Naive thymus-derived CD4-positive, alpha-beta T cell (primary cell): ENCODE measurements at regions of chr20 and their contacts with region 1.

Region 1: DNA sequence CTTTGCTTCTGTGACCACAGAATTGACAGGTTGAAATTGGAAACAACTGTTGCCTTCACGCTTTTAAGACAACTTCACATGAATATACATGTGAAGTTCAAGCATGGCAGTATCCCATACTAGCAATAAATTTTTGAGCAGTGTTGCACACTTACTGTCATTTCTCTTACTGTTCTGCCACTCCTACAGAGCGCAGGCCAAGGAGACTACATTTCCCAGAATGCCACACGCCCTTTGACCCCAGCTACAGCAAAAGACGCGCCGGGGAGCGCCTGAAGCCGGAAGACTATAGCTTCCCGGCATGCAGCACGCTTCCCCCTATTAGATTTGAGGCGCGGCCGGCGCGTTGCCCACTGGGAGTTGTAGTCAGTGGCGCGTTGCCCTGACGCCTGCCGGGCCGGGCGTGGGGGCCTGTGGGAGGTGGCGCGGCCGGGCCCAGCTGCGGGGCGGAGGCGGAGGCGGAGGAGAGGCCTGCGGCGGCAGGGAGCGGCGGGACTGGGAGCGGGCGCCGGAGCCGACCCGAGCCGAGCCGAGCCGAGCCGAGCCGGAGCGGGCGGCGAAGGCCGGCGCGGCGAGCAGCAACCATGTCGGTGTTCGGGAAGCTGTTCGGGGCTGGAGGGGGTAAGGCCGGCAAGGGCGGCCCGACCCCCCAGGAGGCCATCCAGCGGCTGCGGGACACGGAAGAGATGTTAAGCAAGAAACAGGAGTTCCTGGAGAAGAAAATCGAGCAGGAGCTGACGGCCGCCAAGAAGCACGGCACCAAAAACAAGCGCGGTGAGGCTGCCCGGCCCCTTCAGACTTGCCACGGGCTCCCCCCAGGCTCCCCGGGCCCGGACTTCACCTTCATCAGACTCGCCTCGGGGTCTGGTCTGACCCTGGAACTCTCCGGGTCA is at the start of gene CHMP4B:
- DNase-seq: peak; percentile 94 to 99 (median 98)
- ATAC-seq: peak; percentile 98
- H3K4me3 ChIP-seq: peak within 1 kb of the TSS; percentile 74
- H3K4me3 Mint-ChIP-seq: peak within 1 kb of the TSS; percentile 89 to 100 (median 95)
- H3K27ac ChIP-seq: peak within 1 kb of the TSS; percentile 95
- H3K27ac Mint-ChIP-seq: peak within 1 kb of the TSS; percentile 84 to 96 (median 91)
- H3K4me1 ChIP-seq: peaks cover 22 to 23% of the 10 kb centered on the region in 2 donors
- H3K4me1 Mint-ChIP-seq: peaks cover 36 to 47% (median 42%) of the 10 kb centered on the region in 7 donors
- H3K27me3 ChIP-seq: no peaks in the 10 kb centered on the region
- H3K27me3 Mint-ChIP-seq: peaks cover 0 to 5% (median 0%) of the 10 kb centered on the region in 5 donors
- total RNA-seq, gene CHMP4B: 47.5 to 80.8 (median 54.4) TPM

Region 2: GRCh38 chr20:33489495-33490022 is 321.6 kb before region 1 on chr20:
- CTCF ChIA-PET with region 1: no interaction called
- POLR2A ChIA-PET with region 1: interaction called, 3 read pairs
- intact Hi-C with region 1: loop called in 1 of 2 experiments (anchors 1 kb)
- DNase-seq: peak; percentile 97 to 99 (median 99)
- ATAC-seq: peak; percentile 97
- H3K4me3 ChIP-seq: peak overlapping the region; percentile 75
- H3K4me3 Mint-ChIP-seq: peak overlapping the region; percentile 84 to 95 (median 88)
- H3K27ac ChIP-seq: peak overlapping the region; percentile 94
- H3K27ac Mint-ChIP-seq: peak overlapping the region; percentile 86 to 96 (median 90)
- H3K4me1 ChIP-seq: peaks cover 4 to 9% of the 10 kb centered on the region in 2 donors
- H3K4me1 Mint-ChIP-seq: peaks cover 0 to 30% (median 13%) of the 10 kb centered on the region in 7 donors
- H3K27me3 ChIP-seq: no peaks in the 10 kb centered on the region
- H3K27me3 Mint-ChIP-seq: no peaks in the 10 kb centered on the region

Region 3: GRCh38 chr20:33686100-33686983 is 124.8 kb before region 1 on chr20 and contains the start of gene E2F1:
- CTCF ChIA-PET with region 1: no interaction called
- POLR2A ChIA-PET with region 1: no interaction called
- intact Hi-C with region 1: loop called in 1 of 2 experiments (anchors 1 kb)
- DNase-seq: peak; percentile 85 to 98 (median 90)
- ATAC-seq: peak; percentile 98
- H3K4me3 ChIP-seq: peak within 1 kb of the TSS; percentile 55
- H3K4me3 Mint-ChIP-seq: peak within 1 kb of the TSS; percentile 74 to 95 (median 84)
- H3K27ac ChIP-seq: peak within 1 kb of the TSS; percentile 59
- H3K27ac Mint-ChIP-seq: peak within 1 kb of the TSS; percentile 6 to 95 (median 84)
- H3K4me1 ChIP-seq: peaks cover 3 to 27% of the 10 kb centered on the region in 2 donors
- H3K4me1 Mint-ChIP-seq: peaks cover 11 to 72% (median 38%) of the 10 kb centered on the region in 7 donors
- H3K27me3 ChIP-seq: no peaks in the 10 kb centered on the region
- H3K27me3 Mint-ChIP-seq: no peaks in the 10 kb centered on the region
- total RNA-seq, gene E2F1: 0.98 to 61.6 (median 1.6) TPM

Region 4: GRCh38 chr20:33853507-33853813 is 42.3 kb after region 1 on chr20:
- CTCF ChIA-PET with region 1: interaction called, 5 read pairs
- POLR2A ChIA-PET with region 1: interaction called, 13 read pairs
- intact Hi-C with region 1: loop called (anchors 2 to 5 kb)
- DNase-seq: peak in 8 of 9 donors; percentile 11 to 69 (median 60)
- ATAC-seq: peak; percentile 80
- H3K4me3 ChIP-seq: no peak overlapping the region
- H3K4me3 Mint-ChIP-seq: peak overlapping the region; percentile 45 to 84 (median 69)
- H3K27ac ChIP-seq: peak overlapping the region; percentile 69
- H3K27ac Mint-ChIP-seq: peak overlapping the region; percentile 86 to 97 (median 91)
- H3K4me1 ChIP-seq: peaks cover 3 to 37% of the 10 kb centered on the region in 2 donors
- H3K4me1 Mint-ChIP-seq: peaks cover 47 to 82% (median 72%) of the 10 kb centered on the region in 7 donors
- H3K27me3 ChIP-seq: no peaks in the 10 kb centered on the region
- H3K27me3 Mint-ChIP-seq: no peaks in the 10 kb centered on the region

Region 5: DNA sequence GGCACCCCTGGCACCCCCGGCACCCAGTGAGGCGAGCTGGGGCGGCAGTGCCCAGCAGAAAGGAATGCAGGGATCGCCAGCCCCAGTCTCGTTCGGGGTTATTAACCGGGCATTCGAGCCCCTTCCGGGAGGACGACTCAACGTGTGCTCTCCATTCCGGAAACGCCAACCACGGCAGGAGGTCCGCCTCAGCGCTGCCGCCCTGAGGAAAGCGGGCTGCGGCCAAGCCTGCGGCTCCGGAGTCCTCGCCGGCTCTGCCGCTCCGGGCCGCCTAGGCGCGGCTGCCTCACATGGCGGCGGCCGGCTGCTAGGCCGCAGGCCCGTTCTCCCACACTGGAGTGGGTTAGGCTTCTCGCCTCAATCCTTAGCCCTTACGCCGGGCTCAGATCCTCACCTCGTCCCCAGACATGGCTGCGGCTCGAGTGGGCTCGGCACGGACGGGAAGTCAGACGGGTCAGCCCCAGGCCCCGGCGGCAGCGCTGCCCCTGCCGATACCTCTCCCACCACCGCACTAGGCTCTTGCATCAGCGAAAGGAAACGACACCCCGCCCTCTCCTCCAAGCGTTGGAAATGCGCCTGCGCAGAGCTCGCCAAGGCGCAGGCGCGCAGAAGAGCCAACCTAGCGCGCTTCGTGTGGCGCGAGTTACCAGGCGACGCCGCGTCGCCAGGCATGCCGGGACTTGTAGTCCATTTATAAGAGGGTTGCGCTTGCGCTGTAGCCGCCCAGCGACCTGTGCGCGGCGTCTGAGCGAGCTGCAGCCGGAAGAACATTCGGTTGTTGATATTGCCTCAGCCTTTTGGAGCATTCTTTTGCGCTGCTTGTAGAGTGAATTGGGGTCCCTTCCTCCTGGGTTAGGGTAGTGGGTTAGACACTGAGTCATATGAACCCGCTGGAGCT is 300.8 kb after region 1 on chr20 and contains the start of gene EIF2S2:
- CTCF ChIA-PET with region 1: no interaction called
- POLR2A ChIA-PET with region 1: interaction called, 20 read pairs
- intact Hi-C with region 1: loop called (anchors 1 kb)
- DNase-seq: peak; percentile 88 to 97 (median 95)
- ATAC-seq: peak; percentile 95
- H3K4me3 ChIP-seq: peak within 1 kb of the TSS; percentile 92
- H3K4me3 Mint-ChIP-seq: peak within 1 kb of the TSS; percentile 87 to 98 (median 96)
- H3K27ac ChIP-seq: peak within 1 kb of the TSS; percentile 89
- H3K27ac Mint-ChIP-seq: peak within 1 kb of the TSS; percentile 96 to 99 (median 98)
- H3K4me1 ChIP-seq: peaks cover 24 to 34% of the 10 kb centered on the region in 2 donors
- H3K4me1 Mint-ChIP-seq: peaks cover 34 to 53% (median 47%) of the 10 kb centered on the region in 7 donors
- H3K27me3 ChIP-seq: no peaks in the 10 kb centered on the region
- H3K27me3 Mint-ChIP-seq: peaks cover 0 to 15% (median 0%) of the 10 kb centered on the region in 5 donors
- total RNA-seq, gene EIF2S2: 16.8 to 68.4 (median 48.6) TPM

Region 6: DNA sequence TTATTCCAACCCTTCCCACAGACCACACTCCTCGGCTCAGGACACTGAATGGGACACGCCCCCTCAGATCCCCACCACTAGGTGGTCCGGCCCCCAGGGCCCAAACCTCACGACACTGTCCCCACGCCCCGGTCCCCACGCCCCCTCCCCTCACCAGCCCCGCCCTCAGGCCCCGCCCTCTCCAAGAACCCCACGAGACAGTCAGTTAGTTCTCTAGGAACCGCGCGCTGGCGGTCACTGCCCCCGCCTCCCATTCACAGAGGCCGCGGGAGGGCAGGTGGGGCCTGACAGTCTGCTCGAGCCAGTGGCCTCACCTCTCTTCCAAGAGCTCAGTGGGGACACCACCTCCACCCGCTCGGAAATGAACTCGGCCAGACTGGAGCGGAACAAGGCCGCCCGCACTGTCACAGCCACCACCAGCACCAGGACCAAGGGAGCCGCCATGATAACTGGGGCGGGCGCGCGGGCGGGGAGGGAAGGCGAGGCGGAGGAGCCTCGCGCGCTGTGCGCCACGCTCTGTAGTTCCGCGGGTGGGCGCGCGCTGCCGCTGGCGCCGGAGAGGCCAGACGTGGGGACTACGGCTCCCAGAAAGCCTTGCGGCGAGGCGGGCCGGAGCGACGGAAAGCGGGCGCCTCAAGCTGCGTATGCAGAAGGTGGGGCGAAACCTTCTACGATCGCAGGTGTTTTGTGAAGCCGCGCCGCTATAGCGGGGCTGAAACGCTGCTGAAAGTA is 865.7 kb after region 1 on chr20 and contains the start of gene PIGU:
- CTCF ChIA-PET with region 1: no interaction called
- POLR2A ChIA-PET with region 1: no interaction called
- intact Hi-C with region 1: loop called in 1 of 2 experiments (anchors 2 kb)
- DNase-seq: peak; percentile 88 to 97 (median 96)
- ATAC-seq: peak; percentile 99
- H3K4me3 ChIP-seq: peak within 1 kb of the TSS; percentile 63
- H3K4me3 Mint-ChIP-seq: peak within 1 kb of the TSS; percentile 95 to 99 (median 96)
- H3K27ac ChIP-seq: peak within 1 kb of the TSS; percentile 95
- H3K27ac Mint-ChIP-seq: peak within 1 kb of the TSS; percentile 85 to 98 (median 97)
- H3K4me1 ChIP-seq: peaks cover 4 to 5% of the 10 kb centered on the region in 2 donors
- H3K4me1 Mint-ChIP-seq: peaks cover 14 to 37% (median 24%) of the 10 kb centered on the region in 7 donors
- H3K27me3 ChIP-seq: no peaks in the 10 kb centered on the region
- H3K27me3 Mint-ChIP-seq: no peaks in the 10 kb centered on the region
- total RNA-seq, gene PIGU: 8.6 to 21.3 (median 16.1) TPM